AG04449 (cell line): ENCODE measurements at regions of chr18 and their contacts with region 1.

Region 1: DNA sequence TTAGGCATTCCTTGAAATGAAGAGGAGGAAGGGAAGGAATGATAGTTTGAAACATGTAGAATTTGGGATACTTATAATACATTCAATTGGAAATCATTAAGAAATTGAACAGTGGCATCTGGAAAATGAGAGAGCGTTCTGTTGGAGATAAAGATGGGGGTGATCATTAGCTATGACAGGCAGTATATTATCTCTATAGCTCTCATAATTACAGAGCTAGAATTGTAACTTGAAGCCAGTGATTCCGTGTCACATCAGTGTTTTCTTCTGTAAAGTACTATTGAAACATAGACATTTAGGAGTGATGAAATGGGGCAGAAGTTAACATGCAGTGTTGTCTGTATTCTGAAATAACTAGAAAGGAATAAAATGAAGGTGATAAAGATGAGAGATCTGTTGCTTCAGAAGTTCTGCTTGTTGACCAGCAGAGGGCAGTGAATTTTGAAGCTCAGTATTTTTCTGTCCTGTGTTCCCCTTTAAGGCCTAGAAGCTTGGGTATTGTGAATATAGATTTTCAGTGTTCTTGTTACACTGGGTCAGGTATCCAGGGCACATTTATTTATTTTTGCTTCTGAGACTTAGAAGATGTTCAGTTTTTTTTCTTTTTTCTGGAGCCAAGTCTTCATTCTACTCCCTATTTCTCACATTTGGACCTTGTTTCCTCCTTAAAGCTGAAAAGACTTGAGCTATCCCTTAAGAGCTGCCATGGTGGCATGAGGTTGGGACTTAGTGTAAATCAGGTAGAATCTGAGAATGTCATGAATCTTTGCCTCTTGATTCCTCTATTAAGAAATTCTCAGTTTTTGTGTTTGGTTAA is 157.4 kb downstream of the TAF4B start:
- DNase-seq: no peak
- H3K4me3 ChIP-seq: no peak overlapping the region
- CTCF ChIP-seq: peak; percentile 58

Region 2: GRCh38 chr18:26307189-26307773 is 76.4 kb before region 1 on chr18:
- CTCF ChIA-PET with region 1: interaction called, 10 read pairs
- POLR2A ChIA-PET with region 1: no interaction called
- DNase-seq: no peak
- H3K4me3 ChIP-seq: no peak overlapping the region
- CTCF ChIP-seq: peak; percentile 71

Region 3: GRCh38 chr18:26370037-26370436 is 13.6 kb before region 1 on chr18:
- CTCF ChIA-PET with region 1: interaction called, 28 read pairs
- POLR2A ChIA-PET with region 1: no interaction called
- DNase-seq: no peak
- H3K4me3 ChIP-seq: no peak overlapping the region
- CTCF ChIP-seq: no peak

Region 4: DNA sequence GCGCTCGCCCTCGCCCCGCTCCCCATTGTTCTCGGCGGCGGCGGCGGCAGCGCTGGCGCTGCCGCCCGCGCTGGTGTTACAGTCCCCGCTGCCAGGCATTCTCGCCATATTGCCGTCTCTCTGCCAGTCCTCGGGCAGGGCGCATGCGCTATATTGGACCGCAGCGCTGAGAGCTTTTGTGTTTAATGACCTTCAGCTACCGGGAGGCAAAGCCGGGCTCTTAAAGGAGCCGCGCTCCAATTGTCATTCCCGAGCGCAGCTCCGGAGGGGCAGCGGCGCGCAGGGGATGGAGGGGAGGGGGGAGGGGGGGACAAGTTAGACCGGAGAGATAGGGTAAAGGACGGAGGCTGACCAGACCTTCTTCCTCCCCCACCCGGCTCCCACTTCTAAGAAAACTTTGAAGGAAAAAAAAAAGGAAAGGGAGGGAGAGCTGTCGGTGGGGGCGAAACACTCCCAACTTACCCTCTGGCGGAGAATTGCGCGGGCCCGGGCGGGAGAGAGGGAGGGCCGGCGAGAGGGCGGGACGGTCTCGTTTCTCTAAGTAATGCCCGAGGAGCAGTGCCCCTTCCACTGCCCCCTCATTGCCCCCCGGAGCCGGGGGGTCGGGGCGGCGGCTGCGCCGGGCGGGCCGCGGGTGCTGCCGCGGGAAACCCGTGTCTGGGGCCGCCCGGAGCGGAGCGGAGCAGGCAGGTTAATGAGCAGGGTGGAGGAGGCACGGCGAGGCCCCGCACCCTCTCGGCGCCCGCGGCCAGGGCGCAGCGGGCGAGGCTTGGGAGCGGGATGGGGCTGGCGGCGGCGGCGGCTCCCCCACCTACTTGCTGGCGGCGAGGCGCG is 165.0 kb after region 1 on chr18 and contains the start of gene KCTD1:
- CTCF ChIA-PET with region 1: interaction called, 40 read pairs
- POLR2A ChIA-PET with region 1: interaction called, 4 read pairs
- DNase-seq: peak; percentile 44
- H3K4me3 ChIP-seq: peak within 1 kb of the TSS; percentile 78
- CTCF ChIP-seq: no peak

Region 5: DNA sequence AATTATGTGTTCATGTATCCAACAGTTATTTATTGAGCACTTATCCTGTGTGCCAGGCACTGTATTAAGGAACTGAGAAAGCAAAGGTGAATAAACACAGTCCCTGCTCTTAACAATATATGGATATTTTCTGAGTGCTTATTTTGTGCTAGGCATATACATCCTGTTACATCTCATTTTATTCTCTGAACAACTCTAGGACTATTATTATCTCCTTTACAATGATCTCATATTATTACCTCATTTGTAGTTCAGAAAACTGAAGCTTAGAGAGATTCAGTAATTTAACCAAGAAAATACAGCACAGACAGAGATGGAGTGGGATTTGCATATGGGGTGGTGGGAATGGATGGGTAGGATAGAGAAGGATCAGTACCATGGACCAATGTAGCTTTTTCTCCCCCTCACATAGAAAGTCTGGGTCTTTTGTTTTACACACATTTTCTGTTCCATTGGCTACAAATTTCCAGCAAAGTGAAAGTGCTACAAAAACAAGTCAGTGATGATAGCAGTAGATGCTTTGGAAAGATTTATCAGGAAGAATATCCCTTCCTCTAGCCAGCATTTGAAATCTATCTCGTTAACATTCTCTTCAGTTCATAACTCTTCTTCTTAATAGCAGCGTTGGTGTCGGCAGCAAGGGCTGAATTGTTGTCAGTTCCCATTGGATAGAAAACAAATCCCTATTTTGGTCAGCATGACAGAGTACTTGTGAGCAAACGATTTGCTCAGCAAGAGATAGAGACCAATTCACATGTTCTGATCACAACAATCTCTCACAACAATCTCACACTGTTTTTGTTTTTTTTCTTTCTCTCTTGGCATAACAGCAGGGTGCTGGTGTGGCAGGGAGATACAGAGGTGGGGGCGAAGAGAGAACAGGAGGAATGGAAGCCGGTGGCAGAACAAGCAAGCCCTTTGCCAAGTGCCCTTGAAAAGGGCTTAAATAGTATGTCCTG is 266.9 kb after region 1 on chr18:
- CTCF ChIA-PET with region 1: interaction called, 40 read pairs
- POLR2A ChIA-PET with region 1: no interaction called
- DNase-seq: no peak
- H3K4me3 ChIP-seq: no peak overlapping the region
- CTCF ChIP-seq: no peak